Sciatic nerve (tissue), 2 donors: ENCODE measurements at regions of chr15 and their contacts with region 1.

Region 1: DNA sequence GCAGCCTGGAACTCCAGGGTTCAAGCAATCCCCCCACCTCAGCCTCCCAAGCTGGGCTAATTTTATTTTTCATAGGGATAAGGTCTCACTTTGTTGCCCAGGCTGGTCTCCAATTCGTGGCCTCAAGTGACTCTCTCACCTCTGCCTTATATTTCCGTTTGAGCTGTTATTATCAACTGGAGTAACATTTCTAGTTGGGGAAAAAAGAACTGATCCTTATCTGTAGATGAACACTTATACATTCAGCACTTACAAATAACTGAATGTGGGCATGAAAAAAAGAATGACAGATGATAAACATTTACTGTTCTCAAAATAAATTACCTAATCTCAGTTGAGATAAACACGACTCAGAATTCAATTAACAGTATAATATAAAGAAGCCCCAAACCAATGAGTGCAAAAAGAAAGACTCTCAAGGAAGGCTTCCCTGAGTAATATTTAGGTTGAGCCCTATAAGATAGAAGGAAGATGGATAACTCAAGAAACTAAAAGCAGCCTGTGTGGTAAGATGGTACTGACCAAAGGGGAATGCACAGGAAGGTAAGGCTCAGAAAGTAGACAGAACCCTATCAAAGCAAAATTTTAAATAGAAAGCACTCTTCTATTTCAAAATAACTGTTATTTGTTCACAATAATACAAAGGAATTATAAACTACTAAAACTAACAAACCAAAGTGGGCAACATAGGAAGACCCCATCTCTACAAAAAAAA is 11.8 kb downstream of the UBE3A start:
- DNase-seq: no peak
- ATAC-seq: no peak

Region 2: DNA sequence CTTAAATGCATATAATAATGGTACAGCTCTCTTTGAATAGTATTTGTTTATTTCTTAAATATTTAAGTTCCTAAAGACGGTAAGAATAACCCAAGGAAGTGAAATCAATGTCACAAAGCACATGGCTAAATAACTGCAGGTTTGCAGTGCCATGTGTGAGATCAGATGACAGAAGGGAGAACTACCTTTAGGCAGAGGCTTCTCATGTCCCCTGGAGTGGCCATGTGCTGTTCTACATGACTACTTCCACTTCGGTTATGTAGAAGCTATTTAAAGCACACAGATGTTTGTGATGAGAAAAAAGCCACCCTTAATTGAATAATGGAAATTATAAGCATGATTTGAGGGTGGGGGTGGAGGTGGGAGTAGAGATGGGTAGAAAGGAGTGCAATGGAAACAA is 97.4 kb before region 1 on chr15:
- intact Hi-C with region 1: loop called (anchors 10 kb)
- DNase-seq: no peak
- ATAC-seq: no peak

Region 3: DNA sequence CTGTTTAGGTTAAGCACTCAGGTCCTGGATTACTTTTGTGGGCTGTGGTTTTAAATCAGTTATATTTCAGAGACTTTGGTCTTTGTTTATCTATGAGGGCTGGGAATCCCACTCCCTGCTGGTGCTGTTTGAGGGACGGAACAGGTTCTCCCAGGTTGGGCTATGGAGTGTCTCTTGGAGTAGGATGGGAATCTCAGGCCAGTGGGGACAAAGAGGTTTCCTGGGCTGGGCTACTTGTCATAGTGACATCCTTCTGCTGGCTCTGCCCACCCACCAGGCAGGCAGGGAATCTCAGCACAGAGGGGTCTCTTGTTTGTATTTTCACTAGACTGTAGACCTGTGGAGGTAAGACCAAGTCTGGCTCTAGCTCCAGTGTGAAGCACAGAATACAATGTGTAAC is 59.0 kb after region 1 on chr15:
- intact Hi-C with region 1: no loop called
- DNase-seq: no peak
- ATAC-seq: no peak